ENCODE measurements at regions of chr1 and their contacts with region 1.

Region 1: GRCh38 chr1:54397090-54397591 is 9.1 kb downstream of the SSBP3 start:
- DNase-seq: peak in 3 of 6 donors; percentile 37 to 56 (median 51)
- ATAC-seq: peak; percentile 53 to 86 (median 75)
- H3K4me3 ChIP-seq: no peak overlapping the region
- H3K27ac ChIP-seq: peak overlapping the region in 1 of 4 donors; percentile 29
- H3K4me1 ChIP-seq: peaks cover 5 to 23% (median 12%) of the 10 kb centered on the region in 3 donors
- H3K27me3 ChIP-seq: no peaks in the 10 kb centered on the region
- CTCF ChIP-seq: no peak

Region 2: DNA sequence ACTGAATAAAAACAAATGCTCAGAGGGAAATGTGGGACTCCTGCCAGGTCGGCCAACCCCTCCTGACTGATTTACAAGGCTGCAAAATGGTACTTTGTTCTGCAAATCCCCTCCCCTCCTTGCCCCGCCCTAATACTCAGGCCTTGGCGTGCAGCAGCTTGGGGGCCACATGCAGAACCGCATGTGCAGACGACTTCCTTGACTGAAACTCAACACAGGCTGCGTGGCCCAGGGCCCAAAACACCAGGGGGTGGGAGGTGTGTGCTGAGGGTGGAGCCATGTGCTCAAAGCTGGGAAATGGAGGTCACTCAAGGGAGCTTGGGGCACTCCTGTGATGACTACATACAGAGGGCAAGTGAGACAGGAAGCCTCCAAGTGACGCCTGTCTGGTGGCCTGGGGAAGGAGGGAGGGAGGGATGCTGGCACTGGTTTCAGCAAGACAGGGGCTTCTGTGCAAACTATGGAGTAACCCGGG is 109.9 kb before region 1 on chr1:
- intact Hi-C with region 1: loop called in 1 of 3 experiments (anchors 10 kb)
- DNase-seq: peak; percentile 65 to 85 (median 77)
- ATAC-seq: peak; percentile 58 to 80 (median 78)
- H3K4me3 ChIP-seq: no peak overlapping the region
- H3K27ac ChIP-seq: peak overlapping the region; percentile 26 to 62 (median 46)
- H3K4me1 ChIP-seq: peaks cover 8 to 47% (median 37%) of the 10 kb centered on the region in 3 donors
- H3K27me3 ChIP-seq: no peaks in the 10 kb centered on the region
- CTCF ChIP-seq: no peak

Region 3: GRCh38 chr1:54335755-54336108 is 61.4 kb before region 1 on chr1:
- intact Hi-C with region 1: loop called in 1 of 3 experiments (anchors 10 kb)
- DNase-seq: peak in 2 of 6 donors; percentile 20 to 31
- ATAC-seq: peak in 3 of 4 donors; percentile 25 to 48 (median 28)
- H3K4me3 ChIP-seq: no peak overlapping the region
- H3K27ac ChIP-seq: peak overlapping the region in 1 of 4 donors; percentile 56
- H3K4me1 ChIP-seq: peaks cover 22 to 33% (median 32%) of the 10 kb centered on the region in 3 donors
- H3K27me3 ChIP-seq: no peaks in the 10 kb centered on the region
- CTCF ChIP-seq: no peak

Region 4: GRCh38 chr1:54600947-54601725 is 204.0 kb after region 1 on chr1:
- intact Hi-C with region 1: no loop called
- DNase-seq: no peak
- ATAC-seq: no peak
- H3K4me3 ChIP-seq: no peak overlapping the region
- H3K27ac ChIP-seq: no peak overlapping the region
- H3K4me1 ChIP-seq: no peaks in the 10 kb centered on the region
- H3K27me3 ChIP-seq: no peaks in the 10 kb centered on the region
- CTCF ChIP-seq: no peak